T-cell (primary cell): ENCODE measurements at regions of chr11 and their contacts with region 1.

Region 1: GRCh38 chr11:13947379-13947778 is 15.1 kb upstream of the SPON1 start:
- DNase-seq: no peak
- ATAC-seq: no peak
- H3K4me3 ChIP-seq: no peak overlapping the region
- H3K4me3 Mint-ChIP-seq: no peak overlapping the region
- H3K27ac ChIP-seq: no peak overlapping the region
- H3K27ac Mint-ChIP-seq: no peak overlapping the region
- H3K4me1 ChIP-seq: peaks cover 0 to 10% of the 10 kb centered on the region in 2 experiments
- H3K4me1 Mint-ChIP-seq: peaks cover 26 to 36% (median 35%) of the 10 kb centered on the region in 3 donors
- H3K27me3 ChIP-seq: no peaks in the 10 kb centered on the region
- H3K27me3 Mint-ChIP-seq: no peaks in the 10 kb centered on the region

Region 2: DNA sequence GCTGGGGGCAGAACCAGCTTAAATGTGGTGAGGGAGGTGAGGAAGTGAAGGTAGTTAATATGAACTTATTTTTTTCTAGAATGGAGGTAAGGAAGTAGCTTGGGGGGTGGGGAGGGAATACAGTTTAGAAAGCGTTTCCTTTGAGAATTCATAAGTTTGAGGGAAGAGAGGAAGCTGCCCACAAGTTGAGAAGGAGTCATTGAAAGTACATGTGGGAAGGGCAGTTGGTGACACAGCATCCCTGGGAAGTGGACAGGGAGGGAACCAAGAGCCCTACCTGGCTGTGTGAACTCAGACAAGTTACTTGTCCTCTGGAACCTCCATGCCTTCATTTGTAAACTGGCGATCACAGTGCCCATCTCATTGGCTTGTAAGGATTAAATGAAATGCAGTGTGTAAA is 110.7 kb before region 1 on chr11:
- CTCF ChIA-PET with region 1: interaction called in 1 of 2 experiments, 15 read pairs
- POLR2A ChIA-PET with region 1: no interaction called
- DNase-seq: no peak
- ATAC-seq: no peak
- H3K4me3 ChIP-seq: no peak overlapping the region
- H3K4me3 Mint-ChIP-seq: no peak overlapping the region
- H3K27ac ChIP-seq: no peak overlapping the region
- H3K27ac Mint-ChIP-seq: no peak overlapping the region
- H3K4me1 ChIP-seq: no peaks in the 10 kb centered on the region
- H3K4me1 Mint-ChIP-seq: peaks cover 14 to 21% (median 19%) of the 10 kb centered on the region in 3 donors
- H3K27me3 ChIP-seq: no peaks in the 10 kb centered on the region
- H3K27me3 Mint-ChIP-seq: peaks cover 0 to 1% of the 10 kb centered on the region in 2 donors

Region 3: DNA sequence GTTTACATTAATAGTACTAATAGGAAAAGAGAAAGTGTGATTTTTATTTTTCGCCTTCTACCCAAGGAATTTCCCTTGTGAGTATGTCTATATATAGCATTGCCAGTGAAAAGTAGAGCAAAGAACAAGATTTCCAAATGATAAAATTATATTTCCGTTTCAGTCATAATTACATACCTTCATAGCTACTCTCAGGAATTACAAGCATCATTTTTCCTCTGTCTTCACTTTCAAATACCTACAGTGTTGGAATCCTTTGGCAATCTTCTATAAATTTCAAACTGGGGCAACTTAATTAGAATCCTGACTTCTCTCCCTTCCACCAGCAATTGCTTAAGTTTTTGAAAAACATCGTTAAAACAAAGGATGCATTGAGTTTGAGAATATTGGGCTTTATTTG is 20.4 kb before region 1 on chr11:
- CTCF ChIA-PET with region 1: interaction called in 1 of 2 experiments, 3 read pairs
- POLR2A ChIA-PET with region 1: interaction called in 1 of 2 experiments, 10 read pairs
- DNase-seq: no peak
- ATAC-seq: no peak
- H3K4me3 ChIP-seq: no peak overlapping the region
- H3K4me3 Mint-ChIP-seq: no peak overlapping the region
- H3K27ac ChIP-seq: no peak overlapping the region
- H3K27ac Mint-ChIP-seq: peak overlapping the region in 1 of 2 donors; percentile 8
- H3K4me1 ChIP-seq: peaks cover 32% of the 10 kb centered on the region in 2 experiments
- H3K4me1 Mint-ChIP-seq: peaks cover 58 to 69% (median 64%) of the 10 kb centered on the region in 3 donors
- H3K27me3 ChIP-seq: no peaks in the 10 kb centered on the region
- H3K27me3 Mint-ChIP-seq: no peaks in the 10 kb centered on the region

Region 4: DNA sequence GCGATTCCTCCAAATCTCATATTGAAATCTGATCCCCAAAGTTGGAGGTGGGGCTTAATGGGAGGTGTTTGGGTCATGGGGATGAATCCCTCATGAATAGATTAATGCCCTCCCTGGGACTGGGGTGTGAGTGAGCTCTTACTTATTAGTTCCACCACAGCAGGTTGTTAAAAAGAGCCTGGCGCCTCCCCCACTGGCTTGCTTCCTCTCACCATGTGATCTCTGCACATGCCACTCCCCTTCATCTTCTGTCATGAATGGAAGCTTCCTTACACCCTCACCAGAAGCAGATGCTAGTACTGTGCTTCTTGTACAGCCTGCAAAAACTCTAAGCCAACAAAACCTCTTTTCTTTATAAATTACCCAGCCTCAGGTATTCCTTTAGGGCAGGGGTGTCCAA is 402.8 kb after region 1 on chr11:
- CTCF ChIA-PET with region 1: no interaction called
- POLR2A ChIA-PET with region 1: no interaction called
- DNase-seq: peak in 7 of 35 experiments; percentile 2 to 19 (median 5)
- ATAC-seq: peak in 3 of 4 experiments; percentile 43 to 51 (median 44)
- H3K4me3 ChIP-seq: no peak overlapping the region
- H3K4me3 Mint-ChIP-seq: no peak overlapping the region
- H3K27ac ChIP-seq: no peak overlapping the region
- H3K27ac Mint-ChIP-seq: no peak overlapping the region
- H3K4me1 ChIP-seq: peaks cover 0 to 7% of the 10 kb centered on the region in 2 experiments
- H3K4me1 Mint-ChIP-seq: peaks cover 24 to 47% (median 37%) of the 10 kb centered on the region in 3 donors
- H3K27me3 ChIP-seq: no peaks in the 10 kb centered on the region
- H3K27me3 Mint-ChIP-seq: no peaks in the 10 kb centered on the region